ENCODE measurements at regions of chr6 and their contacts with region 1.

Region 1: DNA sequence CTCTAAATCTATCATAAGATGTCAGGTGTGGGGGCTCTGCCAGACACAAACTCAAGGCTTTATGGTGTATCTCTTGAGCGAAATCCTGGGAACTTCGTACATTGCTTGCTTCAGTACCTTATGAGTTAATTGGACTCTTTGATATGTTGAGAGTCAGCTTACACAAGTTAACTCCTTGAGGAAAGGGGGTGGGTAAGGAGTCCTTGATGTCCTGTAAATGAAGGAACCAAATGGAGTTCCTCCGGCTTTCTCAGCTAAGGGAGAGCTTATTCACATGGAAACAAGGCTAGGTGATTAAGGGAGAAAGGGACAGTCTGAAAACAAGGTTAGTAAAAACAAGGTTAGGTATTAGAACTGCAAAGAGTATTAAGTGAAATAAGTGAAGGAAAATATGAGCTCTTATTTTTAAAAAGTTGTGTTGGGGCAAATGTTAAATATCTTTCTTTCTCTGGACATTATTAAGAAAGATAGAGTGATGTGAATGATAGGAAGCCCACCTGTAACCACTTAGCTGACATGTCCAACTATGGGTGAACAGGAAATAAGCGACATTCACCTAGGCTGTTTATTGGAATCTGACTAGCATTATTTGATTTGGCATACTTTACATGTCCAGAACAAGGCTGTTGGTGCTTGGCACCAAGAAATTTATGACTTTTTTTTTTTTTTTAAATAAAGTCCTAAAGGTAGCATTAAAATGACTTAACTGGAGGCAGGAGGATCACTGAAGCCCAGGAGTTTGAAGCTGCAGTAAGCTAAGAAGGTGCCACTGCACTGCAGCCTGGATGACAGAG is 26.5 kb downstream of the GTF2H5 start:
- DNase-seq: no peak
- H3K4me3 ChIP-seq: no peak overlapping the region
- H3K27ac ChIP-seq: no peak overlapping the region
- H3K27me3 ChIP-seq: no peaks in the 10 kb centered on the region
- CTCF ChIP-seq: no peak

Region 2: GRCh38 chr6:158213925-158214674 is 19.4 kb after region 1 on chr6:
- CTCF ChIA-PET with region 1: interaction called, 10 read pairs
- POLR2A ChIA-PET with region 1: no interaction called
- DNase-seq: peak; percentile 53
- H3K4me3 ChIP-seq: no peak overlapping the region
- H3K27ac ChIP-seq: no peak overlapping the region
- H3K27me3 ChIP-seq: no peaks in the 10 kb centered on the region
- CTCF ChIP-seq: peak; percentile 85

Region 3: GRCh38 chr6:158270389-158271127 is 75.9 kb after region 1 on chr6:
- CTCF ChIA-PET with region 1: no interaction called
- POLR2A ChIA-PET with region 1: no interaction called
- DNase-seq: no peak
- H3K4me3 ChIP-seq: no peak overlapping the region
- H3K27ac ChIP-seq: no peak overlapping the region
- H3K27me3 ChIP-seq: no peaks in the 10 kb centered on the region
- CTCF ChIP-seq: no peak